ENCODE measurements at regions of chr10 and their contacts with region 1.

Region 1: DNA sequence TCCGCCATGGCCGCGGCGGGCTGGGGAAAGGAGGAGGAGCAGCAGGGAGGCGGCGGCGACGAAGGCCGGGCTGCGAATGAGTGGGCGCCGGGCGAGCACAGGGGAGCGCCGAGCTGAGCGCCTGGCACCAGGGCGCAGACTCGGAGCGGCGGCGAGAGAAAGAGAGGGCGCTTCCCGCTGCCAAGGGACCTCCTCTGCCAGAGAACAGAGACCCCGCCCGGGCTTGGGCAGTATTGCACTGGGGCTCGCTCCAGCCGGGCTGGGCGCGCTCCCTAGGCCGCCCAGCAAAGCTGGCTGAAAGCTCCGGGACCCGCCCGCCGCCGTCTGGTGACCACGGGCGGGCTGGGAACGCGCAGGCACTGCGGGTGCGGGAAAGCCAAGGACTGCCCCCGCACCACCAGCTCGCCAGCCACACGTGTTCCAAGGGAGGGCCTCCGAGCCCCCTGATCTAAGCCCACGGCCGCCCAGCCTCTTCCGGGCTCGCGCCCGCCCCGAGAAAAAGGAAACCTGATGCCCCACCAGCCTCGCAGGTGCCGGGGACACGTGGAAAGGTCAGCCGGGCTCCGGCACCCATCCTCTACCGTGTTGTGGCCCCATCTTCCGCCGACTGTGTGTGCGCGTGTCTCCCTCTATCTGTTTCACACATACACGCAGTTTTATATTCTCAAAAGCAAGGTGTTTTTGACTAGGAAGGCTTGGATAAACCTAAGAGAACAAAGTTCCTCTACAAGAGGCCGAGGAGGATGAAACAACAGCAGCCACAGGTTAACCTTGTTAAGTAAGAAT is at the start of gene CCDC6:
- DNase-seq: peak; percentile 92
- H3K4me3 ChIP-seq: peak within 1 kb of the TSS; percentile 100
- H3K27ac ChIP-seq: peak within 1 kb of the TSS; percentile 77
- H3K4me1 ChIP-seq: peaks cover 39% of the 10 kb centered on the region
- CTCF ChIP-seq: peak; percentile 69
- total RNA-seq, gene CCDC6: 9.5 and 10.9 TPM in 2 replicates

Region 2: GRCh38 chr10:58268870-58269605 is 1637.6 kb before region 1 on chr10 and contains the start of gene CISD1:
- CTCF ChIA-PET with region 1: no interaction called
- POLR2A ChIA-PET with region 1: no interaction called
- intact Hi-C with region 1: loop called (anchors 10 kb)
- DNase-seq: peak; percentile 98
- H3K4me3 ChIP-seq: peak within 1 kb of the TSS; percentile 90
- H3K27ac ChIP-seq: peak within 1 kb of the TSS; percentile 82
- H3K4me1 ChIP-seq: peaks cover 24% of the 10 kb centered on the region
- CTCF ChIP-seq: no peak
- total RNA-seq, gene CISD1: 22.4 and 24.1 TPM in 2 replicates

Region 3: GRCh38 chr10:59830601-59831259 is 75.9 kb before region 1 on chr10:
- CTCF ChIA-PET with region 1: interaction called, 10 read pairs
- POLR2A ChIA-PET with region 1: interaction called, 51 read pairs
- intact Hi-C with region 1: loop called (anchors 1 kb)
- DNase-seq: peak; percentile 53
- H3K4me3 ChIP-seq: no peak overlapping the region
- H3K27ac ChIP-seq: no peak overlapping the region
- H3K4me1 ChIP-seq: peaks cover 39% of the 10 kb centered on the region
- CTCF ChIP-seq: peak; percentile 89

Region 4: DNA sequence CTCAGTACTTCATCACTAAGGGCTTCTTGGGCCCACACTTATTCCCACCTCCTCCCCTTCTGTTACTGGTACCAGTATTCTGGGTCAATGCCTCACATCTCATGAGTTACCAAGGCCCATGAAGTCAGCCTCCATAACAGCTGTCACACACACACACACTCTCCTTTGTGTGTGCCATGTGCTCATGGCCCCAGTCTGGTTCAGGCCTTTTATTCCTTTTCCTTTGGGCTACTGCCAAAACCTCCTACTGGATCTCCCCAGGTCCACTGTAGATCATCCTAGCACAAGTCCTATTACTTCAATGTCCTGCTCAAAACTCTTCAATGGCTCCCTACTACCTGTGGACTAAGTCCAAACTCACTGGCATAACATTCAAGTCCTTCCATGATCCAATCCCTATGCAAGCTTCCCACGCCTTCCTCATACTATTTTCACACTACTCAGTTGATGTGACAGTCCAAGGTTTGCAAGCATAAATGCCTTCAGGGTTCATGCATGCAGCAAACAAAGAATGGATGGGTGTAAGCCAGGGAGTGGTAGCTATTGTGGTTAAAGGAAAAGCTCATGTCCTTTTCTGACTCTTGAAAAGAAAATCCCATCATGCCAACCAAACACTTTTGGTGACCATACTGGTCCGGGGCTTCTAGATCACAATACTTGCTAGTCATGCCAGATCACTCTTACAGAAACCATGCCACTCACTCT is 68.4 kb before region 1 on chr10:
- CTCF ChIA-PET with region 1: interaction called, 10 read pairs
- POLR2A ChIA-PET with region 1: interaction called, 51 read pairs
- intact Hi-C with region 1: loop called (anchors 1 kb)
- DNase-seq: no peak
- H3K4me3 ChIP-seq: no peak overlapping the region
- H3K27ac ChIP-seq: no peak overlapping the region
- H3K4me1 ChIP-seq: peaks cover 35% of the 10 kb centered on the region
- CTCF ChIP-seq: no peak

Region 5: GRCh38 chr10:59865101-59865500 is 41.5 kb before region 1 on chr10:
- CTCF ChIA-PET with region 1: interaction called, 5 read pairs
- POLR2A ChIA-PET with region 1: interaction called, 5 read pairs
- intact Hi-C with region 1: loop called (anchors 1 kb)
- DNase-seq: peak; percentile 35
- H3K4me3 ChIP-seq: no peak overlapping the region
- H3K27ac ChIP-seq: no peak overlapping the region
- H3K4me1 ChIP-seq: peaks cover 5% of the 10 kb centered on the region
- CTCF ChIP-seq: peak; percentile 75

Region 6: DNA sequence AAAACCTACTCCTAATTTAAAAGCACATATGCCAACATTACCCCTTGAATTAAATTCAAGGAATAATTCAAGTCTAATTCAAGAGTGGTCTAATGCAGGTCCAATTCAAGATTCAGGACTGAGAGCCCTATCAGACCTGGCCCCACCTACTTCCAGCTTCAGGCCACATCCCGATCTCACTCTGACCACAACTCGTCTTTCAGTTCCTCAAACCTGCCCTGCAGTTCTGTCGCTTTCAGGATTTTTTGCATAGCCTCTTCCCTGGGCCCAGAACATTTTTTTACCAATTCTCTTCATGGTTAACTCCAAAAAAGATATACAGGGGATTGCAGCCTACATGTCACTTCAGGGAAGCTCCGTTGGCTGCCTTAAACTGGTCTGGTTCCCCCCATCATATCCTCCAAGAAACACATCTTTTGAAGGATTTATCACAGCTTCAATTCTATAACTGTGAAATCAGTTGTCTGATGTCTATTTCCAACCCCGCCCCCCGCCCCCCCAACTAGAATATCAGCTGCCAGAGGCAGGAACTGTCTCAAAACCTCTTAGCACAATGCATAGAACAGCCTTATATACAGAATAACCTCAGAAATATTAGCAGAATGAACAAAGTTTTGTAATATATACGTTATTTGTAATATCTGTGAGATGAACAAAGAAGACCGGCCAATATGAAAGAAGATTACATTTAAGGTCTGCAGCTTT is 21.0 kb before region 1 on chr10:
- CTCF ChIA-PET with region 1: interaction called, 3 read pairs
- POLR2A ChIA-PET with region 1: interaction called, 3 read pairs
- intact Hi-C with region 1: loop called (anchors 1 kb)
- DNase-seq: peak; percentile 87
- H3K4me3 ChIP-seq: peak overlapping the region; percentile 37
- H3K27ac ChIP-seq: peak overlapping the region; percentile 11
- H3K4me1 ChIP-seq: peaks cover 40% of the 10 kb centered on the region
- CTCF ChIP-seq: no peak

Measured in OCI-LY7 (cell line).